MCF 10A (cell line): ENCODE measurements at regions of chr12 and their contacts with region 1.

Region 1: GRCh38 chr12:118135788-118136558 is at the start of gene PEBP1:
- DNase-seq: peak; percentile 94
- H3K4me3 Mint-ChIP-seq: peak within 1 kb of the TSS; percentile 84
- H3K27ac Mint-ChIP-seq: peak within 1 kb of the TSS; percentile 47
- H3K4me1 Mint-ChIP-seq: peaks cover 10% of the 10 kb centered on the region
- H3K27me3 Mint-ChIP-seq: no peaks in the 10 kb centered on the region
- CTCF ChIP-seq: no peak
- total RNA-seq, gene PEBP1: 91.4 and 117 TPM in 2 replicates

Region 2: DNA sequence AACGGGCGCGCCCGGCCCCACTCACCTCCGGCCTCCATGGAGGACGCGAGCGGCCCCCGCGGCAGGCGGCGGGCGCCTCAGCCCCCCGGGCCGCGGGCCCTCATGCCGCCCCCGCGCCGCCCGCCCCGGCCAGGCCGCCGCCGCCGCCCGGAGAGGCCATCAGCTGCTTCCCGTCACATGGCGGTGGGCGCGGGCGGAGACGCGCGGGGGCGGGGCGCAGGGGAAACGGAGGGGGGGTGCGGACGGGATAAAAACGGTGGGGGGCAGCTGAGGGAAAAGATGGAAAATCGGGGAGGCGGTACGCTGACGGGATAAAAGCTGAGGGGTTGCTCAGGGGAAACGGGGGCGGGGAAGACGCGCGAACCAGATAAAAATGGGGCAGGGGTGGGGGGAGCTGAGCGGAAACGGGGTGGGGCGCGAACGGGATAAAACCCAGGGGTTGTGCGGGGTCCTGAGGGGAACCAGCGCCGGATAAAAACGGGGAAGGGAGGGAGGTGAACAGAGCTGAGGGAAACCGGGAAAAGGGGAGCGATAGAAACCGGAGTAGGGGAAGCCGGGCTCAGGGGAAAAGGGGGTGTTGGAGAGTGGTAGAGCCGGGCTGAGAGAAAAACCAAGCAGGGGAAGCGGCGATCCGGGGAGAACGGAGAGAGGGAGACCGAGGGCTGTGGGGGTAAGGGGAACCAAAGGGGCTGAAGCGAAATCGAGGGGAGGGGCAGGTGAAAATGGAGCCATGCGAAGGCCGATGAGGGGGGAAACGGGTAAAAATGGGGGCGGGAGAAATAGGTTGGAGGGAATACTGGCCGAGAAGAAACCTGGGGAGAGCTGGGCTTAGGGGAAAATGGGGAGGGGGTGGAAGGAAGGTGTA is 74.7 kb before region 1 on chr12 and contains the start of gene WSB2:
- CTCF ChIA-PET with region 1: interaction called, 6 read pairs
- POLR2A ChIA-PET with region 1: interaction called, 23 read pairs
- intact Hi-C with region 1: no loop called
- DNase-seq: no peak
- H3K4me3 Mint-ChIP-seq: peak within 1 kb of the TSS; percentile 89
- H3K27ac Mint-ChIP-seq: peak within 1 kb of the TSS; percentile 93
- H3K4me1 Mint-ChIP-seq: peaks cover 21% of the 10 kb centered on the region
- H3K27me3 Mint-ChIP-seq: no peaks in the 10 kb centered on the region
- CTCF ChIP-seq: no peak
- total RNA-seq, gene WSB2: 55.9 and 99.8 TPM in 2 replicates

Region 3: GRCh38 chr12:118103604-118104382 is 32.2 kb before region 1 on chr12 and contains the start of gene VSIG10:
- CTCF ChIA-PET with region 1: interaction called, 7 read pairs
- POLR2A ChIA-PET with region 1: interaction called, 33 read pairs
- intact Hi-C with region 1: no loop called
- DNase-seq: peak; percentile 52
- H3K4me3 Mint-ChIP-seq: peak within 1 kb of the TSS; percentile 80
- H3K27ac Mint-ChIP-seq: no peak within 1 kb of the TSS
- H3K4me1 Mint-ChIP-seq: peaks cover 12% of the 10 kb centered on the region
- H3K27me3 Mint-ChIP-seq: no peaks in the 10 kb centered on the region
- CTCF ChIP-seq: no peak
- total RNA-seq, gene VSIG10: 10.9 and 17.3 TPM in 2 replicates

Region 4: GRCh38 chr12:118120579-118121363 is 15.2 kb before region 1 on chr12:
- CTCF ChIA-PET with region 1: interaction called, 29 read pairs
- POLR2A ChIA-PET with region 1: interaction called, 15 read pairs
- intact Hi-C with region 1: no loop called
- DNase-seq: peak; percentile 78
- H3K4me3 Mint-ChIP-seq: no peak overlapping the region
- H3K27ac Mint-ChIP-seq: peak overlapping the region; percentile 32
- H3K4me1 Mint-ChIP-seq: peaks cover 5% of the 10 kb centered on the region
- H3K27me3 Mint-ChIP-seq: no peaks in the 10 kb centered on the region
- CTCF ChIP-seq: peak; percentile 78

Region 5: GRCh38 chr12:118175823-118176447 is 40.0 kb after region 1 on chr12:
- CTCF ChIA-PET with region 1: interaction called, 10 read pairs
- POLR2A ChIA-PET with region 1: no interaction called
- intact Hi-C with region 1: no loop called
- DNase-seq: no peak
- H3K4me3 Mint-ChIP-seq: no peak overlapping the region
- H3K27ac Mint-ChIP-seq: no peak overlapping the region
- H3K4me1 Mint-ChIP-seq: no peaks in the 10 kb centered on the region
- H3K27me3 Mint-ChIP-seq: no peaks in the 10 kb centered on the region
- CTCF ChIP-seq: no peak